Head of caudate nucleus (tissue), 42 donors: ENCODE measurements at regions of chr1 and their contacts with region 1.

Region 1: DNA sequence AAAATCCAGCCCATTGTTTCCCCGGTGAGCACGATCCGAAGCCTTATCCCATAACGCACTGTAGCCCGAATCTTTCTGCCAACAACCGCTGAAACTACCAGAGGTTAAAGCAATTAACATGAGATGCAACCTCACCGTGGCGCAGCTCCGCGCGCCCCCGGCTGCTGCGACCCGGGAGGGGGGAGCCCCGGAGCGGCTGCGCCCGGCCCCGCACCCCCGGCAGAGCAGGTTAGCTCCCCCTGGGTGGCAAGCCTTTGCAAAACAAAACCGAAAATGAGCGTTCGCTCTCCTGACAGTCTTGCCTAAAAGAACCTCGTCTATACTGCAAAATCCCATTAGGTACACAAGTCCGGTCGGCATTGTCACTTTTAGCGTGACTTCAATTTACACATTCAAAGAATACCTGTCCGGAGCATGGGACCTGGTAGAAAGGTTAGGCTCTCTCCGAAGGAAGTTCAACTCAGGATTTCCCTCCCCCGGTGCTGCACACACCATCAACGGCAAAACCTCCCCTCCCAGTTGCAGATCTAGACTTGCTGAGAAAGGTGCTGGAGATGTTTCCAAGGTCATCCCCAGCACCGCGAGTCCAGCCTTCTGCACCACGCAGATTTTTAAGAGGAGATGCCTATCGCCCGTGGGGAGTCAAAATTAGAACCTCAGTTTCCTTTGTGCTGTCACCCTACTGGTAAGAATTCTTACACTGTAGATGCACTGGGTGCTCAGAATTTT is 107.5 kb downstream of the ZNF281 start:
- DNase-seq: peak in 41 of 42 donors; percentile 36 to 82 (median 67)

Region 2: DNA sequence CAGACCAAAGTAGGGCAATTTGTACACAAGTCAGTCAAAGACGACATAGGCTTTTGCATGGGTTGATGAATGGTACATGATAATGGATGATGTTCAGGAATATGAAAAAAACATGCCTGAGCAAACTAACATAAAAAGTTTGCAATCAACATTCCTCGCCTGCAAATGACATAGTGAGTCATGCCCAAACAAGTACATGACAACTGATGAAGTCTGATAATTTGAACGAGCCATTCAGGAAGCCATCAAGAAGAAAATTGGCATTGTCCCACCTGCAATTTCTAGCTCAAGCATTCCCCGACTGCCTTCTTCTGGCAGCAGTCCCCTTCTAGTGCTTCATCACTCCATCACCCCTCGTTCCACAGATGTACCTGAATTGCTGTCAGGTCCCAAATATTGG is 393.2 kb before region 1 on chr1:
- intact Hi-C with region 1: no loop called
- DNase-seq: no peak

Region 3: GRCh38 chr1:200184196-200184595 is 118.2 kb before region 1 on chr1:
- intact Hi-C with region 1: no loop called
- DNase-seq: peak in 33 of 42 donors; percentile 10 to 72 (median 33)

Region 4: DNA sequence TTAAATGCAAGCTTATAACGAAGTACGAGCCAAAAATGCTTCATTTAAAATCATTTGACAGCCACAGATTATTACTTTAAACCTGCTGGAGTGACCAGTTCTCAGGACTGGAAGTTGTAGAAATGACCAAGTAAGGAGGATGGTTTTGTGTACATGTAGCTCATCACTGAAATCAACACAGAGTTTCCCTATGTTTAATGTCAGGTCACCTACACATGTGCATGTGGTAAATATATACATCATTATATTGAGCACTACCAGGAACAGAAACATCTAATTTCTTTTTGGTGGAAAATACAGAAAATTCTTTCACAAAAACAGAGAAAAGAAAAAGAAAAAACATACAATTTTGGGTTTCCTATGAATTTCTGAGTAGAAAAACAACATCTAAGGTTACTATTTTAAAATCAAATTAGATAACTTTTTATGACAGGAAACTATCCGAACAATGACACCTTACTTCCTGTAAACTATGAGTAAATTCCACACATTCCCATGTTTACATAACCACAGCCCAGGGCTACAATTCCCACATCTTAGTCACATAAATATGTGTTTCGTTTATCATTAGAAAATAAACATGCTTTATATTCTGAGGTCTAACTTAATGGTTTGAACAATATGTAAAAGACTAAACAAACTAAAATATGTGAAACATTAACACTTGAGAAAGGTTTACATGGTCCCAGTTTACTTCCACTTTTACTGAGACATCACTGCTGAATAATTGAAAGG is 33.9 kb after region 1 on chr1:
- intact Hi-C with region 1: no loop called
- DNase-seq: no peak

Region 5: DNA sequence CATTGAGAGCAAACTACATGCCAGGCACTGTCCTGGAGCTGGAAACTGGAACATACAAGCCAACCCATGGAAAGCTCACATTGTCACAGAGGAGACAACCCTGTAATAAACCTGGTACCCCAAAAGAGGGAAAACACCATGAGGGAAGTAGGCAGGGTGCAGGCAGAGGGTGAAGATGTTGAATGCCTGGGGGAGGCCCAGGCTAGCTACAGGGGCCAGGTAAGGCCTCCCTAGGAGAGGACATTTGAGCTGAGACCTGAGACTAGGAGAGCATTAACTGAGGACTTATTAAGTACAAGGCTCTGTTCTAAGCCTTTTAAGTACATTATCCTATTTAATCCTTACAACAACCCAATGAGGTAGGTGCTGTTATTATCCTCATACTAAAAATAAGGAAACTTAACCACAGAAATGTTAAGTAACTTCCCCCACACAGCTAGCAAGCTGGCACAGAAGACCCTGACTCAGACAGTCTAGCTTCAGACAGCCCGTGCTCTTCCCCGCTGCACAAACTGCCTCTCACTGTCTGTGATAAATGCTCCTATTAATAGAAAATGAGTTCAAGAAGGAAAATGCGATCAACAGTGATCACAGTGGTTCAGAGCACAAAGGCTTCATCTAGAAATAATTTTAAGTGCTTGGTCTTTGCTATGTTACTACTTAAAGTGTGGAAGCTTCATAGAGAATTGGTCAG is 65.6 kb after region 1 on chr1:
- intact Hi-C with region 1: loop called (anchors 10 kb)
- DNase-seq: peak in 40 of 42 donors; percentile 41 to 87 (median 60)

Region 6: GRCh38 chr1:200409761-200410565 is 107.6 kb after region 1 on chr1 and contains the start of gene ZNF281:
- intact Hi-C with region 1: loop called (anchors 5 kb)
- DNase-seq: peak; percentile 84 to 98 (median 95)

Region 7: GRCh38 chr1:201108614-201109013 is 806.3 kb after region 1 on chr1:
- intact Hi-C with region 1: no loop called
- DNase-seq: peak in 12 of 42 donors; percentile 7 to 60 (median 22)